Pancreas (tissue), 10 donors: ENCODE measurements at regions of chr3 and their contacts with region 1.

Region 1: DNA sequence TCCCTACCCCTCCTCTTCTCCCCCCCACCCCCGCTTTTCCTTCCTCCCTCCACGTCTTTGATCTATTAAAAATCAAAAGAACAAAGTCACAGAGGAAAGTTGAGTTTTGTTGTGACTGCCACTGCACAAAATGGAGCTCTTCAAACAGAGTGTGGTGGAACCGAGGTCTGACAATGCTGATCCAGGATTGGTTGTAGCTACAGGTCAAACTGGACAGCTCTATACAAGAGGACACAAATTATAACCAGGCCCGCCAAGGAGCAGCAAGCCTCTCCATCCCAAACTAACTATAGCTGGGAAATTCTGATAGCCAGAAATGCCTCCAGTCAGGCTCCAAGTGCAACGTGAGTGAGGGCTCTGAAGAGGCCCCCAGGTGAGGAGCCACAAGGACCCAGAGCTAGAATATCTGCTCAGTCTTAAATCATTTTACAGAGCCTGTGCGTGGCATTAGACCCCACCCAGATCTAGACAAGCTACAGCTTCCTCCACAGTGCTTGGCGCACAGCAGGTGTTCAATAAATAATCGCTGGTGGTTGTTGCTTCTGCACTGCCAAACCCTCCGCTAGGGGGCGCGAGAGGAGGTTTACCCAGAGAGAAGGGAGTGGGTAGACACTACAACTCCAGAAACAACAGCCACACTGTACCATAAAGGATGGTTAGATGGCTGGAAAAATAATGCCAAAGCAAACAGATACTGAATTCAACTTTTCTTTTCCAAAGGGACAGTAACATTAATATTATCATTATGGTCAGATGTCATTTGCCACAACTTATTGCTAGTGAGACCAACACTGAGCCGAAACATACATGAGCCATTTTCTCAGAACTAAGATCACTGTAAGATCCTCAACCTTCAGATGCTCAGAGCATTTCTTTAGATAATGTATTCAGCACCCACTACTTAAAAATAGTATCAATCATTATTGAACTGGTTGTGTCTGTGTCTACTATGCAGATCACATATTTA is 44.6 kb downstream of the ZIC4 start:
- DNase-seq: peak in 3 of 6 donors; percentile 32 to 80 (median 35)
- ATAC-seq: no peak
- H3K4me3 ChIP-seq: no peak overlapping the region
- H3K27ac ChIP-seq: no peak overlapping the region
- H3K4me1 ChIP-seq: no peaks in the 10 kb centered on the region
- H3K27me3 ChIP-seq: peaks cover 3 to 54% (median 15%) of the 10 kb centered on the region in 4 donors
- CTCF ChIP-seq: peak in 2 of 4 donors; percentile 21 to 23

Region 2: GRCh38 chr3:147418808-147419701 is 57.3 kb after region 1 on chr3:
- intact Hi-C with region 1: loop called in 1 of 3 experiments (anchors 10 kb)
- DNase-seq: peak in 4 of 6 donors; percentile 11 to 80 (median 54)
- ATAC-seq: peak; percentile 48 to 58 (median 56)
- H3K4me3 ChIP-seq: peak overlapping the region in 2 of 4 donors; percentile 5 to 38
- H3K27ac ChIP-seq: no peak overlapping the region
- H3K4me1 ChIP-seq: peaks cover 0 to 14% (median 0%) of the 10 kb centered on the region in 3 donors
- H3K27me3 ChIP-seq: peaks cover 14 to 82% (median 35%) of the 10 kb centered on the region in 4 donors
- CTCF ChIP-seq: no peak